Vagina (tissue), 2 donors: ENCODE measurements at regions of chr9 and their contacts with region 1.

Region 1: DNA sequence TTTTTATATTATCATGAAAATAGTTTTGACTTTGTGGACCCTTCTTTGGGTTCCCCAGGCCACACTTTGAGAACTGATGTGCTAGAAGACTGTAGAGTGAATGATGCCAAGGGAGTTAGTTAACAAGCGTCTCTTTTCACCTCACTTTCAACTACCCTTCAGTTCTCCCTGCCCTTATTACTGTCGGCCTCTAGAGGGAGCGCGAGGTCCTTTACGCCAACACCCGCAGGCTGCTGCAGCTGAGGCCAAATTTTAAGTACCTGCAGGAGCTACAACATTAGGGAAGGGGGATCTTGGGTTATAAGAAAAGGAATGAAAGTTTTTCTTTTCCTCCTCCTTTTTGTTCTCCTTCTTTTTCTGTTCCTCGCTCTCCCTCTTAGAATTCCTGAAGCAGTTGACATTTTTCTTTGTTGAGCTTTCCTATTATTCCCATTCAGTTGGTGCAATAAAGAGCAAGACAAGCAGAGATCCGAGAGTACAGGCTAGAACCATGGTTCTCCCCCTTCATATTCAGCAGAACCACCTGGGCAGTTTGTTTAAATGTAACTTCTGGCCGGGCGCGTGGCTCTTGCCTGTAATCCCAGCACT is 84.0 kb downstream of the ZFAND5 start:
- DNase-seq: no peak
- H3K4me3 ChIP-seq: no peak overlapping the region
- H3K27ac ChIP-seq: no peak overlapping the region
- H3K4me1 ChIP-seq: no peaks in the 10 kb centered on the region
- H3K27me3 ChIP-seq: no peaks in the 10 kb centered on the region
- CTCF ChIP-seq: peak; percentile 52 to 86 (median 79)
- POLR2A ChIP-seq: no peak

Region 2: GRCh38 chr9:71847892-71848291 is 433.1 kb before region 1 on chr9:
- intact Hi-C with region 1: no loop called
- DNase-seq: no peak
- H3K4me3 ChIP-seq: no peak overlapping the region
- H3K27ac ChIP-seq: no peak overlapping the region
- H3K4me1 ChIP-seq: no peaks in the 10 kb centered on the region
- H3K27me3 ChIP-seq: no peaks in the 10 kb centered on the region
- CTCF ChIP-seq: no peak
- POLR2A ChIP-seq: no peak

Region 3: GRCh38 chr9:72823971-72824370 is 543.0 kb after region 1 on chr9:
- intact Hi-C with region 1: loop called (anchors 5 kb)
- DNase-seq: no peak
- H3K4me3 ChIP-seq: no peak overlapping the region
- H3K27ac ChIP-seq: no peak overlapping the region
- H3K4me1 ChIP-seq: peaks cover 19% of the 10 kb centered on the region
- H3K27me3 ChIP-seq: no peaks in the 10 kb centered on the region
- CTCF ChIP-seq: no peak
- POLR2A ChIP-seq: no peak